ENCODE measurements at regions of chr4 and their contacts with region 1.

Region 1: GRCh38 chr4:92387459-92388069 is 83.8 kb downstream of the GRID2 start:
- DNase-seq: no peak
- ATAC-seq: no peak
- H3K4me3 Mint-ChIP-seq: no peak overlapping the region
- H3K27ac Mint-ChIP-seq: no peak overlapping the region
- H3K4me1 Mint-ChIP-seq: no peaks in the 10 kb centered on the region
- H3K27me3 Mint-ChIP-seq: no peaks in the 10 kb centered on the region
- CTCF ChIP-seq: no peak

Region 2: DNA sequence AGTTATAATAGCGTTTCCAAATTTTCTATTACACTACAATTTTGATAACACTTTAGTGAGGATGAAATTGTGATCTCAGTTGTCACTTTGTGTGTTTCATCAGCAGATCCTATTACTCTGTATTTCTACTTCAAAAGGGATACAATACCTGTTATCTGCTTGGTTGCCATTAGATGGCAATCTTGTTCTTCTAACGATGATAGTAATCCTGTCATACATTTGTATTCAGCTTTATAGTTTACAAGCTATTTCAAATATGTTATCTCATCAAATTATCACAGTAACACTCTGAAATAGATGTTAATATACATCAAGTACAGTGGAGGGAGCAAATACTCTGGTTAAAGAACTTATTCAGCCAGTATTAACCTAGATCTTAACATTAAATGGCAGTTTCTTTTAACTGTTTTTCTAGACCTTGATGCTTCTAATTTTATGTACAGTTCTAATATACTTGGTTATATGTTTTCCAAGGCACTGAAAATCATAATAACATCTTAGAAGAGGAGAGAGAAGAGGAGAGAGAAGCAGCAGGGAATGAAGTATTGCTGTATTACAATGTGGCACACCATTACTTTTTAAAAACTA is 1968.3 kb before region 1 on chr4:
- CTCF ChIA-PET with region 1: interaction called, 3 read pairs
- POLR2A ChIA-PET with region 1: no interaction called
- intact Hi-C with region 1: loop called (anchors 1 kb)
- DNase-seq: no peak
- ATAC-seq: no peak
- H3K4me3 Mint-ChIP-seq: no peak overlapping the region
- H3K27ac Mint-ChIP-seq: no peak overlapping the region
- H3K4me1 Mint-ChIP-seq: no peaks in the 10 kb centered on the region
- H3K27me3 Mint-ChIP-seq: no peaks in the 10 kb centered on the region
- CTCF ChIP-seq: no peak

Region 3: GRCh38 chr4:91422011-91422410 is 965.6 kb before region 1 on chr4:
- CTCF ChIA-PET with region 1: no interaction called
- POLR2A ChIA-PET with region 1: no interaction called
- intact Hi-C with region 1: no loop called
- DNase-seq: no peak
- ATAC-seq: no peak
- H3K4me3 Mint-ChIP-seq: no peak overlapping the region
- H3K27ac Mint-ChIP-seq: no peak overlapping the region
- H3K4me1 Mint-ChIP-seq: no peaks in the 10 kb centered on the region
- H3K27me3 Mint-ChIP-seq: no peaks in the 10 kb centered on the region
- CTCF ChIP-seq: no peak

Region 4: DNA sequence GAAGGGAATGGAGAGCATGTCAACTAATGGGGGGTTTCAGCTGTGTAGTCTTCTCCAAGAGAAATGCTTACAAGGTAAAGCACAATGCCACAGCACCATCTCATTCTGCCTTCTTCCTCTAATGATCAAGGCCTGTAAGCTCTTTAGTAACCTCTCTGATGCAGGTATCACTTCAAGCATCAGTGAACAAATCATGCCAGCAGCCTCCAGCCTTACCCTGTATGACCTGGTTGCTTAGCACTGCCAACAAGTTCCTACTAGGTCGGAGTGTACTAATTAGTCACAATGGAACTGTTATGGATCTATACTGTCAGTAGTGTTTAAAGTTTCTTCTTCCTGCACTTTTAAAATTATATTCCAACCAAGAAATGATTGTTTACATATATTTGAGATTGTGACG is 113.9 kb after region 1 on chr4:
- CTCF ChIA-PET with region 1: no interaction called
- POLR2A ChIA-PET with region 1: no interaction called
- intact Hi-C with region 1: no loop called
- DNase-seq: no peak
- ATAC-seq: no peak
- H3K4me3 Mint-ChIP-seq: no peak overlapping the region
- H3K27ac Mint-ChIP-seq: no peak overlapping the region
- H3K4me1 Mint-ChIP-seq: no peaks in the 10 kb centered on the region
- H3K27me3 Mint-ChIP-seq: no peaks in the 10 kb centered on the region
- CTCF ChIP-seq: no peak